Heart right ventricle (tissue), 16 donors: ENCODE measurements at regions of chr17 and their contacts with region 1.

Region 1: GRCh38 chr17:77420804-77421629 is 280.2 kb downstream of the SEC14L1 start:
- DNase-seq: no peak
- ATAC-seq: peak in 1 of 8 donors; percentile 3
- H3K4me3 ChIP-seq: peak overlapping the region in 1 of 10 donors; percentile 10
- H3K27ac ChIP-seq: peak overlapping the region in 9 of 10 donors; percentile 26 to 90 (median 61)
- H3K4me1 ChIP-seq: peaks cover 37 to 77% (median 71%) of the 10 kb centered on the region in 9 donors
- H3K27me3 ChIP-seq: no peaks in the 10 kb centered on the region
- CTCF ChIP-seq: no peak

Region 2: DNA sequence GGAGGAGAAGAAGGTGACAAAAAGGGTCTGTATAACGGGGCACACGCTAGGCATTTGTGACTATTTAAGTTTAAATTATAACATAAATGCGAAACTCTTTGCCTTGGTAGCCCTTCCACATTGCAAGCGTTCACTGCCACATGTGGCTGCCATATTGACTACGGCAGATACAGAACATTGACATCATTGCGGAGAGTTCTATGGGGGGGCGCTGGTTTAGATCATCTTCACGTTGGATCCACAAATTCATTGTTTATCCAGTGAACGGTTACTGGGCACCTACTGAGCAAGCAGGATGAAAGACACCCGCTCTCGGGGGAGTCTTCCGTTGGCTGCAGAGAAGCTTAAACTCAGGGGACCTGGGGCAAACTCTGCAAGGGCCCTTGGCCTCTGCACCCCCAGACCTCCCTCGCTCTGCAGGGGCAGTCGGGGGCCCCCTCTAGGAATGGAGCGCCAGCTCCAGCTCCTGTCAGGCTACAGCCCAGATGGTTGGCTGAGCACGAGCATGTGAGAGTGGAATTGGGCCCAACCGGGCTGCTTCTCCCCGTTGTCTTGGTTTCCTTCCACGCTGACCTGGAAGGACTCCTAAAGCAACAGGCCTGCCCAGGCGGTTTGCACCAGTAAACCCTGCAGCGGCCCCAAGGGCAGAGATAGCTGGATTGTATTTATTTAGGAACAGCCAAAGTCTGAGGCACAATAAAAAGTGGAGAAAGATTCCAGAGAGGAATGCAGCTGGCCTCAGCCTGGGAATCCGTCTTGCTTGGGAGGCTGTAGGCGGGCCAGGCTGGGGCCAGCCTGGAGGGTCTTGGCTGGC is 108.0 kb before region 1 on chr17:
- intact Hi-C with region 1: no loop called
- DNase-seq: peak; percentile 58 to 62
- ATAC-seq: peak; percentile 36 to 84 (median 62)
- H3K4me3 ChIP-seq: no peak overlapping the region
- H3K27ac ChIP-seq: peak overlapping the region in 5 of 10 donors; percentile 0 to 75 (median 15)
- H3K4me1 ChIP-seq: peaks cover 3 to 55% (median 19%) of the 10 kb centered on the region in 9 donors
- H3K27me3 ChIP-seq: no peaks in the 10 kb centered on the region
- CTCF ChIP-seq: no peak

Region 3: GRCh38 chr17:77372444-77373298 is 48.3 kb before region 1 on chr17:
- intact Hi-C with region 1: loop called in 5 of 10 experiments (anchors 5 to 10 kb)
- DNase-seq: peak; percentile 88 to 92
- ATAC-seq: peak; percentile 56 to 75 (median 66)
- H3K4me3 ChIP-seq: peak overlapping the region; percentile 81 to 100 (median 92)
- H3K27ac ChIP-seq: peak overlapping the region; percentile 89 to 99 (median 97)
- H3K4me1 ChIP-seq: peaks cover 46 to 76% (median 72%) of the 10 kb centered on the region in 9 donors
- H3K27me3 ChIP-seq: no peaks in the 10 kb centered on the region
- CTCF ChIP-seq: peak in 2 of 9 donors; percentile 18 to 21

Region 4: DNA sequence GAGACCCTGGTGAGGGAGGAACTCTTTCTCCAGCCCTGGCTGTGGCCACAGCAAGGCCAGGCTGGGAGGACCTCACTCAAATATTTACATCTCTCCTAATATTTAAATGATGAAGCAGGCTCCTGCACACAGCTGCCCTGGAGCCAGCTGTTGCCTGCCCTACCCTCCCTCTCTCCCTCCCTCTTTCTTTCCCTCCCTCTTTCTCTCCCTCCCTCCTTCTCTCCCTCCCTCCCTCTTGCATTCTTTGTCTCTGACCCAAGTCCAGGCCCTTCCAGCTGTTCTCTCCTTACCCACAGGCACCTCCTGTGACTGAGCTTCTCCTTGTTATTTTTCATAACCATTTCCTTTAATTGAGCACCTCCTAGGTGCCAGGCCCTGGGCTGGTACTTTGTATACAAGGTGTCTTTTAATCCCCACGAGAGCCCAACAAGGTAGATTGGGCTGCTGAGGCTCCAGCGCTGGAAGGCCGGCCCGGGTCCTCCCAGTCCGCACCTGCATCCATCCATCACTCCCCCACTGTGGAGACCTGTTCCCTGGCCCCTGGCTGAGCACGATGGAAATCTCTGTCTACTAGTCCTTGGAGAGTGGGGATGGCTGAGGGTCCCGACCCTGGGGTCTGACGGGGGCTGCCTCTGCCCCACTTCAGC is 37.9 kb before region 1 on chr17:
- intact Hi-C with region 1: loop called in 7 of 10 experiments (anchors 5 to 10 kb)
- DNase-seq: peak in 1 of 2 donors; percentile 14
- ATAC-seq: peak in 5 of 8 donors; percentile 11 to 24 (median 15)
- H3K4me3 ChIP-seq: no peak overlapping the region
- H3K27ac ChIP-seq: peak overlapping the region in 9 of 10 donors; percentile 60 to 91 (median 79)
- H3K4me1 ChIP-seq: peaks cover 58 to 100% (median 97%) of the 10 kb centered on the region in 9 donors
- H3K27me3 ChIP-seq: no peaks in the 10 kb centered on the region
- CTCF ChIP-seq: no peak

Region 5: DNA sequence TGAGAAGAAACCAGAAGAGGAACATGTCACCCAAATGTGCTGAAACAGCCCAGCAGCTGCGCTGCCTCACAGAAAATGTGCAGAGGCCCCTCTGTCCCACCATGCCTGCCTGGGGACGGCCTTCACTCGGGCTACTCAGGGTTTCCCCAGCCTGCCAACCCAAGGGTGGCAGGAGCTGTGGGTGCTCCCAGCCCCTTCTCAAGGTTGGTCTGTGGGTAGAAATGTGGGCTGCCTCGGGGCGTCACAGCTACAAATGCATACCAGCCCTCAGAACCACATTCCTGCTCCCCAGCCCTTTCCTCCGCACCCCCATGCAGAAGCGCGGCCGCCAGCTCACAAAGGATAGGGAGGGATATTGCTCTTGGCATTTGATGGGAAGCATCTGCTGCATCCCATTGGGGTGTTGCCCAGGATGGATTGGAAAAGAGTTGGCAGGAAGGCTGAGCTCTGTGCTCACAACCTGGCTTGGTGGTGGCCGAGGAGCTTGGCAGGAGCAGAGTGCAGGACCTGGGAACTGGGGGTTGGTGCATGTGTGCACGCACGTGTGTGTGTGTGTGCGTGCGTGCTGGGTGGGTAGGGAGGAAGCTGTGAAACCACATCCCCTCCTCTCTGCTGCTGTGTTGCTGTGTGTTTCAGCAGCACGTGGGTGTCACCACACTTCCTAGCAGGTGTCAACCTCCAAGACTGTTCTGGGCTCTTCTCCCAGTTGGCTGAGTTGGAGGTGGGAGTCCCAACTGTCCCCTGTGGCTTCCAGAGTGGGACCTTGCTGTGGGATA is 24.2 kb after region 1 on chr17:
- intact Hi-C with region 1: no loop called
- DNase-seq: no peak
- ATAC-seq: peak; percentile 31 to 71 (median 47)
- H3K4me3 ChIP-seq: peak overlapping the region in 4 of 10 donors; percentile 7 to 36 (median 14)
- H3K27ac ChIP-seq: peak overlapping the region in 9 of 10 donors; percentile 59 to 89 (median 74)
- H3K4me1 ChIP-seq: peaks cover 32 to 92% (median 73%) of the 10 kb centered on the region in 9 donors
- H3K27me3 ChIP-seq: no peaks in the 10 kb centered on the region
- CTCF ChIP-seq: no peak

Region 6: GRCh38 chr17:77528516-77529327 is 107.7 kb after region 1 on chr17:
- intact Hi-C with region 1: no loop called
- DNase-seq: peak in 1 of 2 donors; percentile 42
- ATAC-seq: peak; percentile 31 to 56 (median 44)
- H3K4me3 ChIP-seq: peak overlapping the region in 9 of 10 donors; percentile 22 to 58 (median 44)
- H3K27ac ChIP-seq: no peak overlapping the region
- H3K4me1 ChIP-seq: peaks cover 0 to 12% (median 8%) of the 10 kb centered on the region in 9 donors
- H3K27me3 ChIP-seq: peaks cover 5 to 38% (median 22%) of the 10 kb centered on the region in 7 donors
- CTCF ChIP-seq: peak in 2 of 9 donors; percentile 11 to 17

Region 7: GRCh38 chr17:77724876-77725615 is 304.0 kb after region 1 on chr17:
- intact Hi-C with region 1: no loop called
- DNase-seq: no peak
- ATAC-seq: no peak
- H3K4me3 ChIP-seq: no peak overlapping the region
- H3K27ac ChIP-seq: no peak overlapping the region
- H3K4me1 ChIP-seq: peaks cover 0 to 31% (median 11%) of the 10 kb centered on the region in 9 donors
- H3K27me3 ChIP-seq: no peaks in the 10 kb centered on the region
- CTCF ChIP-seq: no peak